Cardiac septum (tissue), 1 donor: ENCODE measurements at regions of chr1 and their contacts with region 1.

Region 1: DNA sequence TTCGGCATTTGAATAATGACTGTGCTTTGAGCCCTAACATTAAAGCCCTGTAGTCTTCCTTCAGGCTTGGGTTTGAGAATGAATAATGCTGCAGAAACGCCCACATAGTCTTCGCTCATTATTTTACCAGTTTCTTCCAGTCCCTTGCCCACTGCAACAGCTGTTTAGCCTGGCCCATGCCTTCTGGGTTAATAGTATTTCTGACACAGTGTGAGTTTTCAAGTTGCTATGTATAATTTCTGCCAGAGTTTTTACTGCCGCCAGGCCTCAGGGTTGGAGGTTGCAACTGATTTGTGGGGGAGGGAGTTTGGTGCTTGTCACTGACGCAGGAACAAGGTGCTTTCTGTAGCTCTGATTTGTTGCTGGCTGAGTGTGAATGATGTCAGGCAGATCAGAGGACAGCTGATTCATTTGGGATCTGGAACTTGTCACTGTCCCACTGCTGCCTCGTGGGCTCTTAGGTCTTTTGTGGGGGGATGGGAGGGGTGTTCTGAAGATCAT is 109.8 kb downstream of the MAST2 start:
- DNase-seq: peak; percentile 77

Region 2: GRCh38 chr1:46026531-46026930 is 113.3 kb after region 1 on chr1:
- intact Hi-C with region 1: loop called (anchors 2 kb)
- DNase-seq: no peak